GM12878 (cell line): ENCODE measurements at regions of chr4 and their contacts with region 1.

Region 1: DNA sequence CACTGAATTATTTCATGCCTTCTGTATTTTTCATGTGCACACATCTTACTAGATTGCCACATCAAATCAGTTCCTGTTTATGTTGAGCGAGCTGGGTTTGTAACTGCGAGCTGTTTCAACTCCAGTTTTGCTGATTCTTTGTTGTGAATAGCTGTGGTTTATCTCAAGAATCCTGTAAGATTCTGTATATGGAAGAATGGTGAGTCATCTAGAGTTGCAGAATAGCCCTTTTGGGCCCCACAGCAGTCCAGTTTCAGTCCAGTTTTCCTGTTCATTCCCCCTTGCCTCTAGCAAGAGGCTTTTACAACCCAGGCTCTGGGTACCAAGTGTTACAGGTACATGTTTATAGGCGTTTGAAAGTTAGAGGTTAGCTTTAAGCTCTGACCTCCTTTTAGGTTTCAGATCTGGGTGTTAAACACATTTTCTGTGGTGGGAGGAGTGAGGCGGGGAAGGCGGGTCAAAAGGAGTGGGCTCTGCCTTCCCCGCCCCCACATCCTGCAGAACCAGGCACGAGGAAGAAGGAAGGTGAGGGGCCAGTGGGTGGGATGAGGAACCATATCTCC is 32.7 kb downstream of the TBC1D14 start:
- DNase-seq: peak; percentile 66
- ATAC-seq: peak; percentile 75
- H3K4me3 ChIP-seq: peak overlapping the region; percentile 30; the same call in 1 of the 2 replicates
- H3K27ac ChIP-seq: peak overlapping the region; percentile 48
- H3K4me1 ChIP-seq: peaks cover 55% of the 10 kb centered on the region
- H3K27me3 ChIP-seq: no peaks in the 10 kb centered on the region
- CTCF ChIP-seq: no peak
- EP300 ChIP-seq: no peak
- POLR2A ChIP-seq: no peak
- RAD21 ChIP-seq: peak; percentile 17; the same call in 1 of the 2 replicates

Region 2: GRCh38 chr4:6437826-6438238 is 504.5 kb before region 1 on chr4:
- CTCF ChIA-PET with region 1: no interaction called
- POLR2A ChIA-PET with region 1: no interaction called
- RAD21 ChIA-PET with region 1: no interaction called
- SMC1A ChIA-PET with region 1: no interaction called
- in situ Hi-C with region 1: no loop called
- intact Hi-C with region 1: no loop called
- DNase-seq: no peak
- ATAC-seq: no peak
- H3K4me3 ChIP-seq: no peak overlapping the region
- H3K27ac ChIP-seq: no peak overlapping the region
- H3K4me1 ChIP-seq: no peaks in the 10 kb centered on the region
- H3K27me3 ChIP-seq: no peaks in the 10 kb centered on the region
- CTCF ChIP-seq: no peak
- EP300 ChIP-seq: no peak
- POLR2A ChIP-seq: no peak
- RAD21 ChIP-seq: no peak

Region 3: GRCh38 chr4:6509587-6509986 is 432.7 kb before region 1 on chr4:
- CTCF ChIA-PET with region 1: no interaction called
- POLR2A ChIA-PET with region 1: no interaction called
- RAD21 ChIA-PET with region 1: no interaction called
- SMC1A ChIA-PET with region 1: no interaction called
- in situ Hi-C with region 1: no loop called
- intact Hi-C with region 1: no loop called
- DNase-seq: no peak
- ATAC-seq: no peak
- H3K4me3 ChIP-seq: no peak overlapping the region
- H3K27ac ChIP-seq: no peak overlapping the region
- H3K4me1 ChIP-seq: no peaks in the 10 kb centered on the region
- H3K27me3 ChIP-seq: no peaks in the 10 kb centered on the region
- CTCF ChIP-seq: no peak
- EP300 ChIP-seq: no peak
- POLR2A ChIP-seq: no peak
- RAD21 ChIP-seq: no peak

Region 4: GRCh38 chr4:6710996-6711395 is 231.3 kb before region 1 on chr4:
- CTCF ChIA-PET with region 1: no interaction called
- POLR2A ChIA-PET with region 1: no interaction called
- RAD21 ChIA-PET with region 1: no interaction called
- SMC1A ChIA-PET with region 1: no interaction called
- in situ Hi-C with region 1: no loop called
- intact Hi-C with region 1: no loop called
- DNase-seq: no peak
- ATAC-seq: no peak
- H3K4me3 ChIP-seq: no peak overlapping the region
- H3K27ac ChIP-seq: no peak overlapping the region
- H3K4me1 ChIP-seq: peaks cover 14% of the 10 kb centered on the region
- H3K27me3 ChIP-seq: no peaks in the 10 kb centered on the region
- CTCF ChIP-seq: no peak
- EP300 ChIP-seq: no peak
- POLR2A ChIP-seq: no peak
- RAD21 ChIP-seq: no peak

Region 5: DNA sequence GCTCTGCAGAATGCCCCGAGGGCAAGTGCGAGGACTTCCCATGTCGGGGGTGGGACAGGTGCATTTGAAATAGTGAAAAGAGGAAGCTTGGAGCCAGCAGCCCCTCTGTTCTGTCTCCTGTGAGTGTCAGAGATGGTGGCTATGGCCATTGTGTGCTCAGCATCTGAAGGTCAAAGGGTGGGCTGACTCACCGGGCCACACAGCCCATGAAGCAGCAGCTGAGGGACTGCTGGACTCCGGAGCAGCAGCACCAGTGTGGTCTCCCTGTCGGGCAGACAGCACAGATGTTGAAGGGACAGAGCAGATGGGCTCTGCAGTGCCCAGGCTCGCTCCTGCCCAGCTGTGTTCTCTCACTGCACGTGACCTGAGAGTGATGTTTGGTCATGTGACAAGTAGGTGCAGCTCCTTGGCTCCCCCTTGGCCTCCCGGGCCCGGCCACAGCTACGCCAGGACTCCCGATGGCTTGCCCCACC is 20.9 kb after region 1 on chr4:
- CTCF ChIA-PET with region 1: interaction called, 5 read pairs
- POLR2A ChIA-PET with region 1: interaction called, 6 read pairs
- RAD21 ChIA-PET with region 1: interaction called, 6 read pairs
- SMC1A ChIA-PET with region 1: interaction called, 8 read pairs
- in situ Hi-C with region 1: no loop called
- intact Hi-C with region 1: loop called (anchors 1 kb)
- DNase-seq: no peak
- ATAC-seq: peak; percentile 5; the same call in 2 of the 3 replicates
- H3K4me3 ChIP-seq: peak overlapping the region; percentile 71; the same call in 1 of the 2 replicates
- H3K27ac ChIP-seq: peak overlapping the region; percentile 95
- H3K4me1 ChIP-seq: peaks cover 28% of the 10 kb centered on the region
- H3K27me3 ChIP-seq: no peaks in the 10 kb centered on the region
- CTCF ChIP-seq: no peak
- EP300 ChIP-seq: no peak
- POLR2A ChIP-seq: no peak
- RAD21 ChIP-seq: no peak

Region 6: DNA sequence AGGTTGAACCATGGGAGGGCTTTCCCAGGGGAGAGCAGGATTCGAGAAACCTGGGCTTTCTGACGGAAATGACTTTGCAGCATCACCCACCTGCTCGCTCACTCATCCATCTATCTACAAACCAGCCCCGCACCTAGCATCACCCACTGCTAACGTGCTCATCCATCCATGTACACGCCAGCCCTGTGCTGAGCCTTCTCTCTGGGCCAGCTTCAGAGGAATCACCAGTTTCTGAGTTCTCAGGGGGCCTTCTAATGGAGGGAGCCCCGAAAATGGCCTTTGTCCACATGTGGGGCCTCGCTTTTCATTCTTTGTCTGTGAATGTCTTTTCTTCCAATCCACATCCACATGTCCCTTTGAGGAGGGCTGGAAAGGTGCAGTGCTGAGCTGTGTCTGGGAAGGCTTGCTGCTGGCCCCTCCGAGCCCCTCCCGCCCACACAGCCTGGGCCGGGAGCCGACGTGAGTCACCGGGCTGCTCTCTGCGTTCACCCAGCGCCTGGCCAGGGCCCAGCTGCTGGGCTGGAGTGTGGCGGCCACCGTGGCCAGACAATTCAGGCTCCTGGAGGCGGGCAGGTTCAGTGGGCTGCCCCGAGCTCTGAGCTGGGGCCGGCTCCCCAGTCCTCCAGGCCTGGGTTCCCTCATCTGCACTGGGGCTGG is 264.7 kb after region 1 on chr4:
- CTCF ChIA-PET with region 1: no interaction called
- POLR2A ChIA-PET with region 1: no interaction called
- RAD21 ChIA-PET with region 1: no interaction called
- SMC1A ChIA-PET with region 1: no interaction called
- in situ Hi-C with region 1: no loop called
- intact Hi-C with region 1: no loop called
- DNase-seq: no peak
- ATAC-seq: no peak
- H3K4me3 ChIP-seq: no peak overlapping the region
- H3K27ac ChIP-seq: no peak overlapping the region
- H3K4me1 ChIP-seq: no peaks in the 10 kb centered on the region
- H3K27me3 ChIP-seq: peaks cover 0 to 3% of the 10 kb centered on the region in 2 experiments; a peak in 3 of 4 replicates
- CTCF ChIP-seq: no peak
- EP300 ChIP-seq: no peak
- POLR2A ChIP-seq: no peak
- RAD21 ChIP-seq: no peak